Testis (tissue), 5 donors: ENCODE measurements at regions of chr12 and their contacts with region 1.

Region 1: DNA sequence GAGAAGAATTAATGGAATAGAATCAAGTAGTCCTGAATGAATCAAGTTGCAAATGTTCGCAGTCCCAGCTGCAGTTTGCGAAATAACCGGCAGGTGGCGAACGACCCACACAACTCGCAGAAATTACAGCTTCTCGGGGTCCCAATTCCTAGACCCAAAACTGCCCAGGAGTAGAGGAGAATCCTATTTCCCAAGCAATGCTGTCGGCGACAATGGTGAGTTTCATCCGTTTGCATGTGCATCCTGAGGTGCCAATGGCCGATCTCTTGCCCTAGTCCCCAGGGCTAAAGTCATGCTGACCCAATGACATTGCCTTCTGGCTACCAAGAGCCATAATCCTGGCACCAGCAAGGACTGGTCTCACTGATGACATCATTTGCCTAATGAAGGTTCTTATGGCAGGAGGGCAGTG is 8.5 kb upstream of the ASCL1 start:
- DNase-seq: peak; percentile 85
- H3K4me3 ChIP-seq: no peak overlapping the region
- H3K27ac ChIP-seq: no peak overlapping the region
- H3K4me1 ChIP-seq: no peaks in the 10 kb centered on the region
- H3K27me3 ChIP-seq: no peaks in the 10 kb centered on the region
- CTCF ChIP-seq: peak; percentile 84 to 98 (median 91)
- POLR2A ChIP-seq: no peak

Region 2: GRCh38 chr12:102781117-102781516 is 167.8 kb before region 1 on chr12:
- intact Hi-C with region 1: no loop called
- DNase-seq: peak; percentile 18
- H3K4me3 ChIP-seq: no peak overlapping the region
- H3K27ac ChIP-seq: no peak overlapping the region
- H3K4me1 ChIP-seq: no peaks in the 10 kb centered on the region
- H3K27me3 ChIP-seq: no peaks in the 10 kb centered on the region
- CTCF ChIP-seq: no peak
- POLR2A ChIP-seq: no peak

Region 3: GRCh38 chr12:103279444-103279843 is 330.5 kb after region 1 on chr12:
- intact Hi-C with region 1: no loop called
- DNase-seq: no peak
- H3K4me3 ChIP-seq: no peak overlapping the region
- H3K27ac ChIP-seq: no peak overlapping the region
- H3K4me1 ChIP-seq: no peaks in the 10 kb centered on the region
- H3K27me3 ChIP-seq: no peaks in the 10 kb centered on the region
- CTCF ChIP-seq: no peak
- POLR2A ChIP-seq: no peak

Region 4: GRCh38 chr12:103548622-103549601 is 600.0 kb after region 1 on chr12:
- intact Hi-C with region 1: loop called (anchors 5 kb)
- DNase-seq: peak; percentile 82
- H3K4me3 ChIP-seq: no peak overlapping the region
- H3K27ac ChIP-seq: no peak overlapping the region
- H3K4me1 ChIP-seq: no peaks in the 10 kb centered on the region
- H3K27me3 ChIP-seq: no peaks in the 10 kb centered on the region
- CTCF ChIP-seq: peak; percentile 73 to 82 (median 75)
- POLR2A ChIP-seq: no peak